ENCODE measurements at regions of chr12 and their contacts with region 1.

Region 1: GRCh38 chr12:3034067-3034750 is 43.0 kb upstream of the TSPAN9 start:
- DNase-seq: peak; percentile 66
- H3K4me3 ChIP-seq: no peak overlapping the region
- H3K27ac ChIP-seq: no peak overlapping the region
- H3K4me1 ChIP-seq: no peaks in the 10 kb centered on the region
- H3K27me3 ChIP-seq: no peaks in the 10 kb centered on the region
- CTCF ChIP-seq: peak; percentile 61 to 73 (median 68)
- POLR2A ChIP-seq: no peak

Region 2: GRCh38 chr12:2857021-2857431 is 177.2 kb before region 1 on chr12 and contains the start of gene TEX52:
- intact Hi-C with region 1: loop called (anchors 5 kb)
- DNase-seq: no peak
- H3K4me3 ChIP-seq: no peak within 1 kb of the TSS
- H3K27ac ChIP-seq: no peak within 1 kb of the TSS
- H3K4me1 ChIP-seq: no peaks in the 10 kb centered on the region
- H3K27me3 ChIP-seq: no peaks in the 10 kb centered on the region
- CTCF ChIP-seq: no peak
- POLR2A ChIP-seq: no peak
- total RNA-seq, gene TEX52: not detected

Region 3: DNA sequence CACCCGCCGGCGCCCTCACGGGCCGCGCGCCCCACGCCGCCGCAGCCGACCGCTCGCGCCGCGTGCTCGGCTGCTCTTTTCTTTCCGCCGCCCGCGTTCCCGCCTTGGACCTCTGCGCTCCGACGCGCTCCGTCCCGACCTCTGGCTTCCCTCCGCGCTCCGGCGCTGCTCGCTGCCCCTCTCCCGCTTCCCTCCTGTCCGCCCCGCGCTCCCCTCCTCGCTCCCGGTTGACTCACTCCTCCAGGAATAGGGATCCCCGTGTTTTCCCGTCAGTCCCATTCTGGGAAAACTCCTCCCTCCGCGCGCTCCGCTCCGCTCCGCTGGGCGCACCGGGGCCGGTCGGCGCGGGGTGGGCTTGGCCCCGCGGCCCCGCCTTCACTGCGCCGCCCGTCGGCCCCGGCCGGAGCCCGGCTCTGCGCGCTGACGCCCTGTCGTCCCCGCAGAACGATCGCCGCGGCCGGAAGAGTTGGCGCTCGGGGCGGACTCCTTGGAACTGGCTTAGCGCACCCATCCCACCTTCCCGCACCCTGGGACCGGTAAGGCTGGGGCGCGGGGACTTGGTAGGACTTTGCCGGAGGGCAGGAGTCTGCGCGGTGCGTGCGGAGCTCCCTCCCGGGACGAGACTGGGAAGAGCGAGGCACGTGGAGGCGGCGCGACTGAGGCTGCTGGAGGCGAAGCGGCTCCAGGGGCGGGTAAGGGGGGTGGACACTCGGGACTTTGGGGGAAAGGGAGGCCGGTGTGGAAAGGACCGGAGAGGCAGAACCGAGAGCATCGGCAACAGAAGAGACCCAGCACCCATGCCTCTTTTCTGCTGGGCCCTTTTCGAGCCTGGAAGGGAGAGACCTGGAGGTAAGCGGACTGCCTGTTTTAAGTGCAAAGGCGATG is 74.5 kb before region 1 on chr12:
- intact Hi-C with region 1: loop called (anchors 10 kb)
- DNase-seq: peak; percentile 61 to 67
- H3K4me3 ChIP-seq: peak overlapping the region; percentile 66 to 75
- H3K27ac ChIP-seq: peak overlapping the region; percentile 82 to 87
- H3K4me1 ChIP-seq: no peaks in the 10 kb centered on the region
- H3K27me3 ChIP-seq: no peaks in the 10 kb centered on the region
- CTCF ChIP-seq: peak in 2 of 4 experiments; percentile 4
- POLR2A ChIP-seq: peak in 1 of 2 donors; percentile 36

Measured in uterus (tissue), 4 donors.